Sciatic nerve (tissue), 2 donors: ENCODE measurements at regions of chr14 and their contacts with region 1.

Region 1: GRCh38 chr14:60184146-60184904 is 19.1 kb upstream of the DHRS7 start:
- DNase-seq: no peak
- ATAC-seq: peak; percentile 77

Region 2: DNA sequence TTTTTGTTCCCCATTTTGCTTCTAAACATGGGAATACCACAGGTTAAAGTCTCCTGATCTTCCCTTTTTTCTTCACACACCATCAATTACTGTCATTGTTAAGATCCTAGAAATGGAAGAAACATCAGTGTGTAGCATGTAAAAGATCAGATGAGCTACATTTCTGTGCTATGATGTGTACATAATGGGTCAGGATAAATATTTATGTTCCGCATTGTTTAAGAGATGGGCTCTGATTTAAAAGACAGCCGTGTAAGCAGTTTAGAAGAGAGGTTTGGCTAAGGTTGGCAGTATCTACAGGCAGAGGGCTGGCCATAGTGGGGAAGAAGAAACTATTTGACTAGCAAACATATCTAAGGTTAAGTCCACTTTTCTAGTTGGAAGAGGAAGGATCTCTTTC is 215.0 kb before region 1 on chr14:
- intact Hi-C with region 1: loop called (anchors 10 kb)
- DNase-seq: no peak
- ATAC-seq: no peak

Region 3: DNA sequence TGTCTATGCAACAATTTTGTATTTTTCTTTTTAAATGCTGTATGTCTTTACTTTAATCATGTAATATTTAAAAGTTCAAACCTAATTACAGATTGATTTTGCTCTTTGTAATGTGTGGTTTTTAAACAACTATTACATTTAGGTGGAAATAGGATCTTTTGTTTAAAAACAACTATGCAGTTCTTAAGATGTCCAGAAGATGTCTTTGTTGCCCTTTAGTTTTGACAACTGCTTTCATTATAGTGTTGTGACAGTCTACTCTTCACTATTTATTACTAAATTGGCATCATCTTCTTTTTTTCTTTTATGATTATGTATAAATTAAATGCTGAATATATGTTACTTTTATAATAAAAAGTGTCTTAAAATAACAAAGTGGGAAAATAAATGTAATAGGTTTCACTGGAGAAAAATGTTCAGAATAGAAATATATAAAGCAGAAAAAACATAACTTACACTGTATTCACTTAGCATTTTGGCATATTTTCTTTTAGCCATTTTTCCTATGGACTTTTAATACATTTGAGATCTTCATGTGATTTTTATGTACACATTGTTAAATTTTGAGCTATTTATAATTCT is 119.7 kb before region 1 on chr14:
- intact Hi-C with region 1: loop called (anchors 10 kb)
- DNase-seq: no peak
- ATAC-seq: peak; percentile 74

Region 4: GRCh38 chr14:60151715-60152114 is 32.6 kb before region 1 on chr14:
- intact Hi-C with region 1: no loop called
- DNase-seq: peak; percentile 70
- ATAC-seq: peak; percentile 94